ENCODE measurements at regions of chr6 and their contacts with region 1.

Region 1: GRCh38 chr6:63352587-63353285 is 33.0 kb upstream of the LGSN start:
- DNase-seq: no peak
- H3K4me3 Mint-ChIP-seq: peak overlapping the region; percentile 41
- H3K27ac Mint-ChIP-seq: no peak overlapping the region
- H3K4me1 Mint-ChIP-seq: peaks cover 15% of the 10 kb centered on the region
- H3K27me3 Mint-ChIP-seq: peaks cover 6% of the 10 kb centered on the region

Region 2: DNA sequence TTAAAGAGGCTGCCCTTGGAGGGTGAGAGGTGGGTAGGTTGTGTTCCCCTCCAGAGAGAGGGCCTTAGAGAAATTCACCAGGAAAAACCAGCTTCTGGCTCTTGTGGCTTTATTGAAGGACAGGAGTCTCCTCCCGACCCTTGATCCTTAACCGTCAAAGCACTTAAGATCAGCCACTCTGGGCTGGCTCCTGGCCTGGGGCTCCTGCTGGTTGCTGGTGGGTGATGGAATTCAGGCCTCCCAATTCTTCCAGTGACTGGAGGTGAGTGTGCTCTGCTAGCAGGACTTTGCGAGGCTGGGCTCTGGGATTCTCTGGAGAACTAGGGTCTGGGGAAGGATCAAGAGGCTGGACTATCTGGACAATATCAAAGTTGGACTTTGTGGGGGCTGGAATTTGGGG is 42.7 kb after region 1 on chr6:
- intact Hi-C with region 1: no loop called
- DNase-seq: no peak
- H3K4me3 Mint-ChIP-seq: no peak overlapping the region
- H3K27ac Mint-ChIP-seq: no peak overlapping the region
- H3K4me1 Mint-ChIP-seq: no peaks in the 10 kb centered on the region
- H3K27me3 Mint-ChIP-seq: peaks cover 1% of the 10 kb centered on the region

Region 3: DNA sequence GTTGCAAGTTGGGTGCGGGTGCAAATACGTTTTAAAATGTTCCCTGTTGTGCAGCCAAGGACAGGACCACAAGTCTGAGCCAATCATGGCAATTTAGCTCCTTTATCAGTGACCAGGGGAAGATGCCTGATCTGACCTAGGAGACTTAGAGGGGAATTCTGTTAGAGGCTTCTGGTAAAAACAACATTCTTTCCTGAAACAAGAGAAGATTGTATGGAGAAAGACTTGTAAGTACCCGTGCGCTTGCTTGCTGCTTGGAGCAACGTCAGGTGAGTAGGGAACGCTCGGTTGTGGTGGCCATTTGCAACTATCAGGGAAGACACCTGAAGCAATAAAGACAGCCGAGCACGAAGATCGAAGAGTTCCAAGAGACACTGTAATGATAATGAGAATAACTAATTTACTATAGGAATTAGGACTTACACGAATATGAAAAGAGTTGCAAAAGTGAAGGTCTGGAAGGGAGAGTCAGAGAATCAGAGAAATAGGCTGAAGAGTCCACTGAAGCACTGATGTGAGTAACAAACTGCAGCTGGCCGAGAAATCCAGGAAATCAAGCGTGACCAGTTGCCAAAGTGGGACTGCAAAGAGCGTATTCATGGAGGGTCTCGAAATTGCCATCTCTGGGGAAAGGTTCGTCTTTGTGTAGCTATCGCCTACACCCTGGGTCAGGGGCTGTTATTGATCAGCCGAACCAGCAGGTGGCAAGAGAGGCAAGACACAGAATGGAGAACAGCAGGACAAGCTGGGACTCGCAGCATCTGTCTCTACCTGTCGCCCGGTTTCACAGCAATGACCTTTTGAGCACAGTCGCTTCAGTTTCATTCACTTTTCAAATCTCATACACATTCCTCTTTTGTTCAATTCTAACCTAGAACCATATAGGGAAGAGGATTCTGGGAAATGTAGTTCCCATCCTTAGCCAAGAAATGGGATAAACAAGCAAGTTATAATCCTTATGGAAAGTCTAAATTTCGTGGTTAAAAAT is 245.6 kb after region 1 on chr6:
- intact Hi-C with region 1: loop called (anchors 1 kb)
- DNase-seq: peak; percentile 63
- H3K4me3 Mint-ChIP-seq: peak overlapping the region; percentile 86
- H3K27ac Mint-ChIP-seq: no peak overlapping the region
- H3K4me1 Mint-ChIP-seq: peaks cover 16% of the 10 kb centered on the region
- H3K27me3 Mint-ChIP-seq: peaks cover 10% of the 10 kb centered on the region